Endothelial cell of umbilical vein (primary cell): ENCODE measurements at regions of chr15 and their contacts with region 1.

Region 1: GRCh38 chr15:99565299-99566156 is at the start of gene MEF2A:
- DNase-seq: peak; percentile 89
- H3K4me3 ChIP-seq: peak within 1 kb of the TSS; percentile 67 to 90 (median 89)
- H3K27ac ChIP-seq: peak within 1 kb of the TSS; percentile 82
- H3K4me1 ChIP-seq: peaks cover 31% of the 10 kb centered on the region
- H3K27me3 ChIP-seq: no peaks in the 10 kb centered on the region
- CTCF ChIP-seq: no peak
- POLR2A ChIP-seq: peak; percentile 77
- total RNA-seq, gene MEF2A: 45.3 and 50.1 TPM in 2 replicates

Region 2: DNA sequence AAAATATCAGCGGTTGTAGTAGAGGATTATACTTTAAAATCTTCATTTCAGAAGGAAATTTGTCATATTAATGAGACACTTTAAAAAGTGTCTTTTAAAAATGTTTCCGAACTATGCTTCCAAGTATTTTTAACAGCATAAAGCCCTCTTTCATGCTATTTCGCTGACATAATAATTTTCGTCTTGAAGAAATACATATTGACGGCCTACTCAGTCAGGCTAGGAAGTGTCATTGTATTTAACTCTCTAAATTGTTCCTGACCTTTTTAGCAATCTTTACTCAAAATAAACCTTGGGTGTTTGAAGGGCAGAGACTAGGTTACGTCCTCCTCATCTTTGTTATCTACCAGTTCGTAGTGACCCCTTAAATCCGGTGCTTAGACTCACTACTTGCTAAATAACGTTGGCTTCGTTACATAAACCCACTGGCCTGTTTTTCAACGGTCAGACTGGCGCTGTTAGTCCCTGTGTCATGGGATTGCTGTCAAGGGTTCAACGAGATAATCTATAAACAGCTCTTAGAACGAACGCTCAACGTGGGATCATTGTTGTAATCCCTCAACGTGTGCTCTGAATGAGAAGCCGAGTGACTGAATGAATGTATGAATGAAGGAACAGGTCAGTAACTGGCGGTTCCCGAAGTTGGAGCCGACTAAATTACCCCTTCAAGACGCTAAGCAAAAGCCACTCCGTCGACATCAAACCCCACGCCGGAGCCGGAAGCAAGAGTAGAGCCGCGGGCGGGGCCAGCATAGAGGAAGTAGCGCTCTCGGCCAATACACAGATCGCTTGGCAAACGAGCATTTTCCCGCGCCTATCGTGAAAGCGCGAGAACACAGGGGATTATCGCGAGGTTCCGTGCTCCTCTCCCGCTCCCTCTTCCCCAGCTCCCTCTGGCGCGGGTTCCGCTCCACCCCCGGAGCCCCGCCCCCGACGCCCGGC is 314.8 kb before region 1 on chr15:
- CTCF ChIA-PET with region 1: no interaction called
- POLR2A ChIA-PET with region 1: no interaction called
- dilution Hi-C with region 1: no loop called
- intact Hi-C with region 1: loop called (anchors 2 kb)
- DNase-seq: peak; percentile 100
- H3K4me3 ChIP-seq: peak overlapping the region; percentile 77 to 100 (median 80)
- H3K27ac ChIP-seq: peak overlapping the region; percentile 89
- H3K4me1 ChIP-seq: peaks cover 30% of the 10 kb centered on the region
- H3K27me3 ChIP-seq: no peaks in the 10 kb centered on the region
- CTCF ChIP-seq: no peak
- POLR2A ChIP-seq: peak; percentile 89

Region 3: GRCh38 chr15:99343881-99344551 is 221.5 kb before region 1 on chr15:
- CTCF ChIA-PET with region 1: interaction called, 4 read pairs
- POLR2A ChIA-PET with region 1: no interaction called
- dilution Hi-C with region 1: no loop called
- intact Hi-C with region 1: loop called (anchors 2 kb)
- DNase-seq: peak; percentile 75
- H3K4me3 ChIP-seq: no peak overlapping the region
- H3K27ac ChIP-seq: peak overlapping the region; percentile 13
- H3K4me1 ChIP-seq: peaks cover 14% of the 10 kb centered on the region
- H3K27me3 ChIP-seq: no peaks in the 10 kb centered on the region
- CTCF ChIP-seq: peak; percentile 68 to 70
- POLR2A ChIP-seq: no peak

Region 4: DNA sequence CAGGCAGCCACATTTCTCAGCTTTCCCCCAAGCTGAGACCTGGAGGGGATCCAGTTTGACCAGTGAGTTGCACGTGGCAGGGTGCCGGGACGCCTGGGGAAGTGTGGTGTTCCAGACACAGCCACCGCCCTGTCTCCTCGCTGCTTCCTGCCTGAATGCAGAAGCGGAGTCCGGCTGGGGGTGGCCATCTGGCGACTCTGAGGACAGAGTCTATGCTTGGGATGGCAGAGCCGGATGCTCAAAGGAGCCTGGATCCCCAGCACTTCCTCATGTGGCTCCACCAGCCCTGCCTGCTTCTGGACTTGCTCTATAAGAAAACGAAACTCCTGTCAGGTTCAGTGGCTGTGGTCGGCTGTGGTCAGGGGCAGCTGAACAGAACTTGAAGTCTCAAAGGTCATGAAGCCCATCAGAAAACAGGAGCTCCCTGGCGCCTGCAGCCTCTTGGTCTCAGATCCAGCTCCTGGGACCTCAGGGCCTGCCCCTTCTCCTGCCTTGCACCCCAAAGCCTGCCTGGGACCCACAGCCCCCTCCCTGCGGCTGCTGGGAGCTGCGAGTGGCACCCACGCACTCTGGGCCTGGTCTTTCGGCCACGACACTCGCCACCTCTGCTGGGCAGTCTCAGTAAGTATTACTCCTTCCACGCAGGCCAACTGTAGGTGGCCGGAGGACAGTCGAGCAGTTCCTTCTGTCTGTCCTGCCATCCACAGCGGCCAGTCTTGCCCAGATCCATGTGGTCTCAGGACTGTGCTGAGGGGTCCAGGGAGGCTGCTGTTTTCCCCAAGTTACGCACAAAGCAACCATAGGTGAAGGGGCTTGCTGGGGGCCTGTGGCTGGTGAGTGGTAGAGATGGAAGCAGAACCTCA is 112.5 kb before region 1 on chr15:
- CTCF ChIA-PET with region 1: no interaction called
- POLR2A ChIA-PET with region 1: interaction called, 5 read pairs
- dilution Hi-C with region 1: no loop called
- intact Hi-C with region 1: loop called (anchors 1 kb)
- DNase-seq: peak; percentile 67
- H3K4me3 ChIP-seq: no peak overlapping the region
- H3K27ac ChIP-seq: peak overlapping the region; percentile 97
- H3K4me1 ChIP-seq: peaks cover 56% of the 10 kb centered on the region
- H3K27me3 ChIP-seq: no peaks in the 10 kb centered on the region
- CTCF ChIP-seq: no peak
- POLR2A ChIP-seq: peak; percentile 14

Region 5: GRCh38 chr15:99507504-99508310 is 57.8 kb before region 1 on chr15:
- CTCF ChIA-PET with region 1: interaction called, 4 read pairs
- POLR2A ChIA-PET with region 1: no interaction called
- dilution Hi-C with region 1: no loop called
- intact Hi-C with region 1: loop called (anchors 2 kb)
- DNase-seq: peak; percentile 82
- H3K4me3 ChIP-seq: no peak overlapping the region
- H3K27ac ChIP-seq: peak overlapping the region; percentile 10
- H3K4me1 ChIP-seq: peaks cover 30% of the 10 kb centered on the region
- H3K27me3 ChIP-seq: no peaks in the 10 kb centered on the region
- CTCF ChIP-seq: no peak
- POLR2A ChIP-seq: no peak

Region 6: GRCh38 chr15:99682455-99682854 is 116.9 kb after region 1 on chr15:
- CTCF ChIA-PET with region 1: interaction called, 3 read pairs
- POLR2A ChIA-PET with region 1: no interaction called
- dilution Hi-C with region 1: no loop called
- intact Hi-C with region 1: loop called (anchors 1 kb)
- DNase-seq: peak; percentile 94
- H3K4me3 ChIP-seq: peak overlapping the region in 1 of 3 experiments; percentile 41
- H3K27ac ChIP-seq: peak overlapping the region; percentile 95
- H3K4me1 ChIP-seq: peaks cover 23% of the 10 kb centered on the region
- H3K27me3 ChIP-seq: no peaks in the 10 kb centered on the region
- CTCF ChIP-seq: no peak
- POLR2A ChIP-seq: no peak